Aorta (tissue), 5 donors: ENCODE measurements at regions of chr5 and their contacts with region 1.

Region 1: GRCh38 chr5:181243512-181244343 is at the start of gene RACK1:
- DNase-seq: peak; percentile 92 to 96
- ATAC-seq: peak; percentile 86
- H3K4me3 ChIP-seq: peak within 1 kb of the TSS; percentile 57 to 76
- H3K27ac ChIP-seq: peak within 1 kb of the TSS; percentile 7 to 78
- H3K4me1 ChIP-seq: no peaks in the 10 kb centered on the region
- H3K27me3 ChIP-seq: no peaks in the 10 kb centered on the region
- total RNA-seq, gene RACK1: 922 to 1,191 TPM

Region 2: GRCh38 chr5:180810210-180810958 is 433.3 kb before region 1 on chr5:
- intact Hi-C with region 1: loop called in 1 of 2 experiments (anchors 10 kb)
- DNase-seq: peak; percentile 98 to 99
- ATAC-seq: peak; percentile 98
- H3K4me3 ChIP-seq: peak overlapping the region; percentile 68 to 71
- H3K27ac ChIP-seq: peak overlapping the region; percentile 83 to 92
- H3K4me1 ChIP-seq: peaks cover 5 to 15% of the 10 kb centered on the region in 2 donors
- H3K27me3 ChIP-seq: no peaks in the 10 kb centered on the region